Prostate gland (tissue), 2 donors: ENCODE measurements at regions of chrX and their contacts with region 1.

Region 1: GRCh38 chrX:39730662-39731397 is 366.9 kb downstream of the BCOR start:
- DNase-seq: peak; percentile 83
- H3K4me3 ChIP-seq: no peak overlapping the region
- H3K27ac ChIP-seq: peak overlapping the region in 1 of 2 donors; percentile 31
- H3K4me1 ChIP-seq: peaks cover 4% of the 10 kb centered on the region
- H3K27me3 ChIP-seq: no peaks in the 10 kb centered on the region
- CTCF ChIP-seq: peak; percentile 20 to 71 (median 62)
- POLR2A ChIP-seq: no peak

Region 2: GRCh38 chrX:39907964-39908616 is 177.3 kb after region 1 on chrX:
- intact Hi-C with region 1: loop called (anchors 10 kb)
- DNase-seq: peak; percentile 52
- H3K4me3 ChIP-seq: no peak overlapping the region
- H3K27ac ChIP-seq: no peak overlapping the region
- H3K4me1 ChIP-seq: no peaks in the 10 kb centered on the region
- H3K27me3 ChIP-seq: no peaks in the 10 kb centered on the region
- CTCF ChIP-seq: no peak
- POLR2A ChIP-seq: no peak

Region 3: DNA sequence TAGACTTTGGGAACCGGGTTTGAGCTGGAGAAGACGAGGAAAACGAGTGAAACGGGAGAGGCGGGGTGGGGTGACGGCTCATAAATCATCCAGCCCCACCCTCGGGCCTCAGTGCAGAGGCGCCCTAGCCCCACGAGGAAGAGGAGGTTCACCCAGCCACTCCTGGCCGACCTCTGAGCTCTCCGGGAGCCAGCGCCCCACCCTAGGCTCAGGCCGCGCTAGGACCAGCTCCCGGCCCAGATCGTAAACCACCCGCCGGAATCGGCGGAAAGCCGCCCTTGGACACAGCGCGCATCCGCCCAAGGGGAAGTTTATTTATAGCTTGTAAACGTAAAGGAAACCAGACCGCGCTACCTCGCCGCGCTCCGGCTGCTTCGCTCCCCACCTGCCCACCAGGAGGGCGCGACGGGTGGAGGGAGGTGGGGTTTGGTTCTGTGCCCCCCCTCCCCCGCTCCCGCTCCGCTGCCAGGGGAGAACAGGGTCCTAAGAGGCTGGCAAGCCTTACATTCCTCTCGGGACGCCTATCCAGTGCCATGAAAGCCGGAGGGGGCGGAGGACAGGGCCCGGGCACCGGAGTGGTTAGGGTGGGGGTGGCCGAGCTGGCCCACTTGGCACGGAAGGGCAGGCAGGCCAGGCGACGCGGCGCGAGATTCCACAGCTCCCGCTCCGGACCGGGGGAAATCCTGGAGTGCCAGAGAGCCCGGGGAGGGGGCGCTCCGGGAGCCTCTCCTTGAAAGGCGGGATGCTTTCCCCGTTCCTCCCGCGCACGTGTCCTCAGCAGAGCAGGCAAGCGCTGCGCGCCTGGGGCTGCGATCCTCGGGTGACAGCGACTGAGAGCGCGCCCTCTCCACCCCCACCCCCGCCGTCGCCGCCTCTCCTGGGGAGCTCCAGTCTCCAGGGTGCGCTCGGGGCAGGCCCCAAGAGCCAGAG is 282.7 kb after region 1 on chrX:
- intact Hi-C with region 1: loop called (anchors 10 kb)
- DNase-seq: peak; percentile 70
- H3K4me3 ChIP-seq: peak overlapping the region; percentile 40 to 45
- H3K27ac ChIP-seq: peak overlapping the region; percentile 87 to 90
- H3K4me1 ChIP-seq: no peaks in the 10 kb centered on the region
- H3K27me3 ChIP-seq: no peaks in the 10 kb centered on the region
- CTCF ChIP-seq: no peak
- POLR2A ChIP-seq: no peak

Region 4: DNA sequence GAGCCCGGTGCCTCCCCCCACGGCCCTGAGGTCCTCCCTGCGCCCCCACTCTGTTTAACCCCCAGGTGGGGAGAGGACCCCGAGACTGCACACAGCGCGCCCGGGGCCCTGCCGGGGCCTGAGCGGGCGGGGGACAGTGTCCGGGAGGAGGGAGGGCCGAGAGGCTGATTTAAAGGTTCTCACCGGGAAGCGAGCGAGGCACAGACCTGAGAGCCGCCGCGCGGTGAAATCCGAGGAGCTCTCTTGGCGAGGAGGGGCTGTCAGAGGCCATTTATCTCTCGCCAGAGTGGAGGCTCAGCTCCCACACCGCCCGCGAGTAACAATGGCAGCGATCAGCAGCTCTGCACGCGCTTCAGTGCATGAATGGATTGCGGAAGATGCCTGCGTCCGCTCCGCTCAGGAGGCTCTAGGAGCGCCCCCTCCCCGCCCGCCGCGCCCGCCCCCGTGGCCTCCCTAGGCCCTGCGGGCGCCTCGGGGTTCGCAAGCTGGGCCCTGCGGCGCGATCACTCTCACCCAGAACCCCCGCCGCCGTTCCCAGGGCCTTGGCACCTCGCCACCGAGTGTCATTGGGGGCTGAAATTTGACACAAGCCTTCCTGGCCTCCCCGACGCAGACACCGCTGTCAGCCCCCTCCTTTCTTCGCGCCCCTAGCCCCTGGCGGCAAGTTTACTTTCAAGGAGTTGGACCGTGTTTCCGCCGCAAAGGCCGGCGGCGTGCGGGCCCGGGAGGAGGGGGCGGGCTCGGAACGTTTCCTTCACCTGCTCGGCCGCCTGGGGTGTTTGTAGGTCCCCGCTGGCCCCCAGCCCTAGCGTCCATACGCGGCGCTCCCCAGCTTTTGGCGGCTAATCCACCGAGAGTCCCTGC is 415.7 kb after region 1 on chrX:
- intact Hi-C with region 1: loop called (anchors 10 kb)
- DNase-seq: no peak
- H3K4me3 ChIP-seq: peak overlapping the region; percentile 32 to 38
- H3K27ac ChIP-seq: peak overlapping the region; percentile 41 to 56
- H3K4me1 ChIP-seq: no peaks in the 10 kb centered on the region
- H3K27me3 ChIP-seq: no peaks in the 10 kb centered on the region
- CTCF ChIP-seq: peak in 1 of 4 experiments; percentile 8
- POLR2A ChIP-seq: peak; percentile 18

Region 5: GRCh38 chrX:40169193-40170101 is 438.6 kb after region 1 on chrX:
- intact Hi-C with region 1: loop called (anchors 10 kb)
- DNase-seq: peak; percentile 40
- H3K4me3 ChIP-seq: no peak overlapping the region
- H3K27ac ChIP-seq: no peak overlapping the region
- H3K4me1 ChIP-seq: no peaks in the 10 kb centered on the region
- H3K27me3 ChIP-seq: no peaks in the 10 kb centered on the region
- CTCF ChIP-seq: peak in 1 of 4 experiments; percentile 23
- POLR2A ChIP-seq: no peak